ENCODE measurements at regions of chr11 and their contacts with region 1.

Region 1: DNA sequence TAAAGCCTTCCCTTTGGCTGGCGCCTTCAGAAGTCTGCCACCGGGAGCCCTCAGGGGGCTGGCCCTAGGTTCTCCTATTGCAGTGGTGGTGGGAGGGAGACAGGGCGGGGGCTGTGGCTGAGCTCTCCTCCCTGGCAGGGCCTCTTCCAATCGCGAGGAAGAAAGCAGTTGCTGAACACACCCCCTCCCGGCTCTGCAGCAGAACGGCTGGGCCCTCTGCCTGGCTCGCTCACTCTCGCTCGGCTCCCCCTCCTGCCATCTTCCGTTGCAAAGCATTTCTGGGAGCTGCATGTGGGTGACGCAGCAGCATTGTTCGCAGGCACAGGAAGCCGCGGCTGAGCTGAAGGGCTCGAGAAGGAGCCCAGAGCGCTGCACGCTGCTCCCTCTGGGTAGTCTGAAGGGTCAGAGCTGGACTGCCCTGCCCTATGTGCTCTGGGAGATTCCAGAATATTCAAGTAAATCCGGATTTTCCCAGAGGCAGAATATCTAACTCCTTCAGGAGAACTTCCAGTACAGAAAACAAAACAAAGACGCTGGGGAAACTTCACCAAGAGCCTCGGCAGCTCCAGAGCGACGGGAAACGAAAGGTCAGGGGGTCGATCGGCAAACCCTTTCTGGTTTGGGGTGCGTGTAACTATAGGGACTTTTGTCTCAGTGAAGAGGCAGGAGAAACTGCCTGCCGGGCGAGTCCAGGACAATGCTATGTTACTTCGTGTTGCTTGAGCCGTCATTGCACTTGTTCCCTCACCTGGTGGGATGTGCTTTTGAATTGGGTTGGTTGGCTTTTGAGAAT is 26.3 kb upstream of the GRK2 start:
- DNase-seq: peak; percentile 91 to 99 (median 95)
- ATAC-seq: peak; percentile 88
- H3K4me3 ChIP-seq: peak overlapping the region; percentile 97
- H3K4me3 Mint-ChIP-seq: peak overlapping the region; percentile 100
- H3K27ac ChIP-seq: peak overlapping the region; percentile 97 to 98
- H3K27ac Mint-ChIP-seq: peak overlapping the region; percentile 98
- H3K4me1 ChIP-seq: peaks cover 46% of the 10 kb centered on the region
- H3K4me1 Mint-ChIP-seq: peaks cover 61% of the 10 kb centered on the region
- H3K27me3 ChIP-seq: no peaks in the 10 kb centered on the region
- H3K27me3 Mint-ChIP-seq: no peaks in the 10 kb centered on the region
- CTCF ChIP-seq: no peak

Region 2: DNA sequence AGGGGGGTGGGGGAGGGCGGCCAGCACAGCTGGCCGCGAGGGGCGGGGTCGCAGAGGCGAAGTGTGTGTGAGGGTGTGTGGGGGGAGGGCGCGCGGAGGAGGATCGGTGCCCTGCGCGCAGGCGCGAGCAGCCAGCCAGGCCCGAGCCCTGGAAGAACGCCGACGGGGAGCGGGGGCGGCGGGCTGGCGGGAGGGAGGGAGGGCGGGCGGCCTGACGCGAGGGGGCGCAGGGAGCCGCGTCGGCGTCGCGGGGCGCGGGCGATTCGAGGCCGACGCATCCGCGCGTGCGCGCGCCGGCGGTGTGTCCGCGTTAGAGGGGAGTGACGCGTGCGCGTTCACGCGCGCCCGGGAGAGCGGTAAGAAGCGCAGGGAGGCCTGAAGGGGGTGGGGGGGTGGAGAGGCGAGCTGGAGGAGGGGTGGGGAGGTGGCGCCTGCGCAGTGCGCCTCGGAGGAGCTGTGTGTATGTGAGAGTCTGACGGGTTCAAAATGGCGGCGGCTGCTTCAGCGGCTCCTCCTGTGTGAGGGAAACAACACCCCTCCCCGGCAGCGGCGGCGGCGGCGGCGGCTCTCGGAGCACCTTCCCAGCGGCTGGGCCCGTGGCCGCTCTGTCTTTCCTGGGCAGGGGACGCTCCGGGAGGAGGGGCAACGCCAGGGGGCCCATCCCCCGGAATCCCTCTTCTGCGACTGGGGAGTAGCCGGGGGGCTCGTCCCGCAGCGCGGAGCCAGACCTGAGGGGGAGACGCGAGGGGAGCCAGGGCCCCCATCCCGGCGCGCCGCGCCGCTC is 121.0 kb before region 1 on chr11 and contains the start of gene KDM2A:
- CTCF ChIA-PET with region 1: interaction called, 3 read pairs
- POLR2A ChIA-PET with region 1: interaction called, 48 read pairs
- intact Hi-C with region 1: loop called in 1 of 2 experiments (anchors 2 kb)
- DNase-seq: peak; percentile 97 to 100 (median 99)
- ATAC-seq: peak; percentile 80
- H3K4me3 ChIP-seq: peak within 1 kb of the TSS; percentile 94
- H3K4me3 Mint-ChIP-seq: peak within 1 kb of the TSS; percentile 94
- H3K27ac ChIP-seq: peak within 1 kb of the TSS; percentile 77 to 78
- H3K27ac Mint-ChIP-seq: peak within 1 kb of the TSS; percentile 91
- H3K4me1 ChIP-seq: peaks cover 17% of the 10 kb centered on the region
- H3K4me1 Mint-ChIP-seq: peaks cover 35% of the 10 kb centered on the region
- H3K27me3 ChIP-seq: no peaks in the 10 kb centered on the region
- H3K27me3 Mint-ChIP-seq: no peaks in the 10 kb centered on the region
- CTCF ChIP-seq: no peak
- total RNA-seq, gene KDM2A: 410 to 412 TPM

Region 3: GRCh38 chr11:67178878-67179277 is 61.1 kb before region 1 on chr11:
- CTCF ChIA-PET with region 1: no interaction called
- POLR2A ChIA-PET with region 1: no interaction called
- intact Hi-C with region 1: no loop called
- DNase-seq: no peak
- ATAC-seq: no peak
- H3K4me3 ChIP-seq: no peak overlapping the region
- H3K4me3 Mint-ChIP-seq: no peak overlapping the region
- H3K27ac ChIP-seq: no peak overlapping the region
- H3K27ac Mint-ChIP-seq: no peak overlapping the region
- H3K4me1 ChIP-seq: peaks cover 2% of the 10 kb centered on the region
- H3K4me1 Mint-ChIP-seq: peaks cover 33% of the 10 kb centered on the region
- H3K27me3 ChIP-seq: no peaks in the 10 kb centered on the region
- H3K27me3 Mint-ChIP-seq: no peaks in the 10 kb centered on the region
- CTCF ChIP-seq: no peak

Region 4: GRCh38 chr11:67265633-67266423 is 25.8 kb after region 1 on chr11:
- CTCF ChIA-PET with region 1: interaction called, 5 read pairs
- POLR2A ChIA-PET with region 1: interaction called, 28 read pairs
- intact Hi-C with region 1: loop called in 1 of 2 experiments (anchors 2 kb)
- DNase-seq: peak; percentile 58 to 92 (median 76)
- ATAC-seq: peak; percentile 47
- H3K4me3 ChIP-seq: peak overlapping the region; percentile 27
- H3K4me3 Mint-ChIP-seq: peak overlapping the region; percentile 85
- H3K27ac ChIP-seq: peak overlapping the region; percentile 15 to 33
- H3K27ac Mint-ChIP-seq: peak overlapping the region; percentile 88
- H3K4me1 ChIP-seq: peaks cover 70% of the 10 kb centered on the region
- H3K4me1 Mint-ChIP-seq: peaks cover 74% of the 10 kb centered on the region
- H3K27me3 ChIP-seq: no peaks in the 10 kb centered on the region
- H3K27me3 Mint-ChIP-seq: no peaks in the 10 kb centered on the region
- CTCF ChIP-seq: peak; percentile 59

Region 5: GRCh38 chr11:67288452-67289225 is 48.7 kb after region 1 on chr11:
- CTCF ChIA-PET with region 1: interaction called, 4 read pairs
- POLR2A ChIA-PET with region 1: interaction called, 42 read pairs
- intact Hi-C with region 1: loop called in 1 of 2 experiments (anchors 10 kb)
- DNase-seq: peak; percentile 79 to 95 (median 89)
- ATAC-seq: peak; percentile 63
- H3K4me3 ChIP-seq: peak overlapping the region; percentile 91
- H3K4me3 Mint-ChIP-seq: peak overlapping the region; percentile 83
- H3K27ac ChIP-seq: peak overlapping the region; percentile 90 to 95
- H3K27ac Mint-ChIP-seq: peak overlapping the region; percentile 90
- H3K4me1 ChIP-seq: peaks cover 86% of the 10 kb centered on the region
- H3K4me1 Mint-ChIP-seq: peaks cover 49% of the 10 kb centered on the region
- H3K27me3 ChIP-seq: no peaks in the 10 kb centered on the region
- H3K27me3 Mint-ChIP-seq: no peaks in the 10 kb centered on the region
- CTCF ChIP-seq: peak; percentile 48

Region 6: GRCh38 chr11:67317205-67317887 is 77.4 kb after region 1 on chr11:
- CTCF ChIA-PET with region 1: interaction called, 16 read pairs
- POLR2A ChIA-PET with region 1: interaction called, 26 read pairs
- intact Hi-C with region 1: no loop called
- DNase-seq: peak; percentile 96 to 99 (median 98)
- ATAC-seq: peak; percentile 78
- H3K4me3 ChIP-seq: peak overlapping the region; percentile 82
- H3K4me3 Mint-ChIP-seq: peak overlapping the region; percentile 99
- H3K27ac ChIP-seq: peak overlapping the region; percentile 46 to 70
- H3K27ac Mint-ChIP-seq: peak overlapping the region; percentile 85
- H3K4me1 ChIP-seq: peaks cover 42% of the 10 kb centered on the region
- H3K4me1 Mint-ChIP-seq: peaks cover 54% of the 10 kb centered on the region
- H3K27me3 ChIP-seq: no peaks in the 10 kb centered on the region
- H3K27me3 Mint-ChIP-seq: no peaks in the 10 kb centered on the region
- CTCF ChIP-seq: peak; percentile 88

Region 7: DNA sequence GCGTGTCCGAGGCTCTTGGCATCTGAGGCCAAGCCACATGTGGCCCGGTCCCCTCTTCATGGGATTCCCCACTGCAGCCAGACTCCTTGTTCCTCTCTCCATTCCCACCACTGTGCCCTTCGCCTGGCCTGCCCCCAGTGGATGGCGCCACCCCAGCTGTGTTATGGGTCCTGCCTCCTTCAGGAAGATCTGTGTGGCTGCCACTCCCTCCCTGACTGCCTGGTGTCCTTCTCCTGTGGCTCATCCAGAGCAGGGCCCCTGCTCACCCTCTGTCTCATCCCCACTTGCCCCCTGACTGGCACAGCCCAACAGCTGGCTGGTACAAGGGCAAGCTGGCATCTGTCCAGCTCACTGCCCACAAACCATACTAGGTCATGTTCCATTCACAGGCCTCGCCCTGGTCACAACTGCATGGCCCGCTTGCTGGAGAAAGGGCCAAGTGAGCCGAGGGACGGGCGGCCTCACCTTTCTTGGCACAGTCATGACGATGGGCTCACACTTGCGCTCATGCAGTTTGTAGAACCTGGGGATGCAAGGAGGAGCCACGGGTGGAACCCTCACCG is 199.4 kb after region 1 on chr11:
- CTCF ChIA-PET with region 1: no interaction called
- POLR2A ChIA-PET with region 1: interaction called, 12 read pairs
- intact Hi-C with region 1: no loop called
- DNase-seq: peak in 5 of 14 experiments; percentile 23 to 64 (median 48)
- ATAC-seq: no peak
- H3K4me3 ChIP-seq: peak overlapping the region; percentile 97
- H3K4me3 Mint-ChIP-seq: peak overlapping the region; percentile 98
- H3K27ac ChIP-seq: peak overlapping the region; percentile 72 to 94
- H3K27ac Mint-ChIP-seq: peak overlapping the region; percentile 98
- H3K4me1 ChIP-seq: peaks cover 79% of the 10 kb centered on the region
- H3K4me1 Mint-ChIP-seq: peaks cover 63% of the 10 kb centered on the region
- H3K27me3 ChIP-seq: no peaks in the 10 kb centered on the region
- H3K27me3 Mint-ChIP-seq: no peaks in the 10 kb centered on the region
- CTCF ChIP-seq: no peak

Region 8: GRCh38 chr11:67613960-67614715 is 374.2 kb after region 1 on chr11:
- CTCF ChIA-PET with region 1: no interaction called
- POLR2A ChIA-PET with region 1: interaction called, 11 read pairs
- intact Hi-C with region 1: no loop called
- DNase-seq: peak; percentile 67 to 94 (median 78)
- ATAC-seq: peak; percentile 96
- H3K4me3 ChIP-seq: peak overlapping the region; percentile 55
- H3K4me3 Mint-ChIP-seq: peak overlapping the region; percentile 89
- H3K27ac ChIP-seq: peak overlapping the region; percentile 92
- H3K27ac Mint-ChIP-seq: peak overlapping the region; percentile 96
- H3K4me1 ChIP-seq: peaks cover 37% of the 10 kb centered on the region
- H3K4me1 Mint-ChIP-seq: peaks cover 33% of the 10 kb centered on the region
- H3K27me3 ChIP-seq: peaks cover 0 to 3% of the 10 kb centered on the region in 2 experiments
- H3K27me3 Mint-ChIP-seq: no peaks in the 10 kb centered on the region
- CTCF ChIP-seq: peak; percentile 60

Region 9: GRCh38 chr11:68010090-68011041 is 770.4 kb after region 1 on chr11 and contains the start of gene ALDH3B1:
- CTCF ChIA-PET with region 1: no interaction called
- POLR2A ChIA-PET with region 1: no interaction called
- intact Hi-C with region 1: no loop called
- DNase-seq: peak in 3 of 14 experiments; percentile 33 to 60 (median 49)
- ATAC-seq: no peak
- H3K4me3 ChIP-seq: peak within 1 kb of the TSS; percentile 24
- H3K4me3 Mint-ChIP-seq: peak within 1 kb of the TSS; percentile 20
- H3K27ac ChIP-seq: no peak within 1 kb of the TSS
- H3K27ac Mint-ChIP-seq: peak within 1 kb of the TSS; percentile 64
- H3K4me1 ChIP-seq: peaks cover 5% of the 10 kb centered on the region
- H3K4me1 Mint-ChIP-seq: peaks cover 9% of the 10 kb centered on the region
- H3K27me3 ChIP-seq: no peaks in the 10 kb centered on the region
- H3K27me3 Mint-ChIP-seq: peaks cover 7% of the 10 kb centered on the region
- CTCF ChIP-seq: no peak
- total RNA-seq, gene ALDH3B1: 0.34 to 0.44 TPM